ENCODE measurements at regions of chr11 and their contacts with region 1.

Region 1: GRCh38 chr11:119964136-119965025 is 173.5 kb downstream of the TRIM29 start:
- DNase-seq: no peak
- ATAC-seq: no peak

Region 2: DNA sequence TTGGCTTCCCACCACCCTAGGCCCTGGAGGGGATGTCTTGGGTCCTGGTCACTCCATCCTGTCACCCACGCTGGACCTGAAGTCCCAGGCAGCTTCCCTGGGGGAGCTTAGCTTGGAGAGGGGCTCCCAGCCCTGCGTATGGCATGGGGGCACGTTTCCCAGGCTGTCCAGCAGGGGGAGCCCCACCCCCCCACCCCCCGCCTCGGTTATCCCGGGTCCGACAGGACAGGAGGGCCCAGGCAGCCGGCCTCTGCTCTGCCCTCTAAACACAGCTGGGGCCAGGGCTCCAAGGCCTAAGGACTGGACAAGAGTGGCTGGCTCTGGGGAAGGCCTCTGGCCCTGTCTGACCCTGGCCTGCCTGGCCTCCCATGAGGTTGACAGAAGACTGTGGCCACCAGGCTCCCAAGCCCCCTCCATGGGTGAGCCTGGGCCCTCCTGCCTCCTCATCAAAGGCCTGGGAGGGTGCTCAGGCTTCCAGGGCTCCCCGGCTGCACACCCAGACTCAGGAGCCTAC is 340.2 kb before region 1 on chr11:
- intact Hi-C with region 1: loop called in 1 of 2 experiments (anchors 5 kb)
- DNase-seq: no peak
- ATAC-seq: no peak

Region 3: DNA sequence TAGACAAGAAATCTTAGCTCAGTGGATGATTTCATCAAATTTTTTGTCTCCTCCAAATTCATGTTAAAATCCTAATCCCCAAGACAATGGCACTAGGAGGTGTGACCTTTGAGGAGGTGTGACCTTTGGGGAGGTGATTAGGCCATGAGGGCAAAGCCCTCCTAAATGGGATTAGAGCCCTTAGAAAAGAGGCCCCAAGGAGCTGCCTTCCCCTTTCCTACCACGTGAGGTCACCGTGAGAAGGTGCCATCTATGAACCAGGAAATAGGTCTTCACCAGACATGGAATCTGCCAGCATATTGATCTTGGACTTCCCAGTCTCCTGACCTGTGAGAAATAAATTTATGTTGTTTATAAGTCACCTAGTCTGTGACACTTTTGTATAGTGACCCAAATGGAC is 34.8 kb after region 1 on chr11:
- intact Hi-C with region 1: no loop called
- DNase-seq: no peak
- ATAC-seq: no peak

Region 4: GRCh38 chr11:120281143-120281795 is 316.9 kb after region 1 on chr11:
- intact Hi-C with region 1: no loop called
- DNase-seq: peak; percentile 45
- ATAC-seq: peak; percentile 58 to 70